ENCODE measurements at regions of chr10 and their contacts with region 1.

Region 1: GRCh38 chr10:47047671-47048525 is 136.7 kb downstream of the PTPN20 start:
- DNase-seq: peak; percentile 84 to 93 (median 93)
- ATAC-seq: peak; percentile 71 to 82
- H3K4me3 ChIP-seq: no peak overlapping the region
- H3K27ac ChIP-seq: no peak overlapping the region
- H3K4me1 ChIP-seq: peaks cover 2% of the 10 kb centered on the region
- H3K27me3 ChIP-seq: no peaks in the 10 kb centered on the region

Region 2: DNA sequence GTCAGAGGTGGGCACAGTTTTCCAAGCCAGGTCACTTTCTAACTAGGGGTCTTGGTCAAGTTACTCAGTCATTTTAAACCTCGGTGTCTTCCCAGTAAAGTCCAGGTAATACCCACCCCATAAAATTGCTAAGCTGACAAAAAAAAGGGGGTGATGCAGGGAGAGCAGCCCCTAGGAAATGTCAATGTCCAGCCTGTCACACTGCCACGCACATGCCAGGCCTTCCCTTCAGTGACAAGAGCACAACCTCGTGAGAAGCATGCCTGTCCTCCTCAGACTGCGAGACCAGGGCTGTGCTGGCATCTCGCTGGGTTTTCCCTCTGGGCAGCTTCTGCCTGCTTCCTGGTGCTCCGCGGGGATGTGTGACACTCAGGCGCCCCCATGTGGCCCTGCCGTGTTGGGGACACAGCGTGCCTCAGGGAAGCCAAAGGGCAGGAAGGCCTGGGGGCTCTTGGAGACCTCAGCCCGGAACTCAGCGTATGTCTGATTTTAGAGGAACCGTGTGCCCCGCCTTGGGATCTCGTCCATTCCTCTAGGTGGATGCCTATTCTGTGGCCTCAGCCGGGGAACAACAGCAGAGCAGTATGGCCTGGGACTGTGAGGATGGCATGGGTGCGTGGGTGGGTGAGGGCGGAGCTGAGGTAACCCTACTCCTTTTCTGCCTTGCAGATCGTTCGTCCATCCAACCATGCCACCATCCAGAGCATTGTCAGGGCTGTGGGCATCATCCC is 264.2 kb after region 1 on chr10:
- intact Hi-C with region 1: loop called (anchors 2 to 5 kb)
- DNase-seq: peak; percentile 85 to 96 (median 94)
- ATAC-seq: peak; percentile 94 to 95
- H3K4me3 ChIP-seq: no peak overlapping the region
- H3K27ac ChIP-seq: no peak overlapping the region
- H3K4me1 ChIP-seq: no peaks in the 10 kb centered on the region
- H3K27me3 ChIP-seq: no peaks in the 10 kb centered on the region